ENCODE measurements at regions of chr14 and their contacts with region 1.

Region 1: DNA sequence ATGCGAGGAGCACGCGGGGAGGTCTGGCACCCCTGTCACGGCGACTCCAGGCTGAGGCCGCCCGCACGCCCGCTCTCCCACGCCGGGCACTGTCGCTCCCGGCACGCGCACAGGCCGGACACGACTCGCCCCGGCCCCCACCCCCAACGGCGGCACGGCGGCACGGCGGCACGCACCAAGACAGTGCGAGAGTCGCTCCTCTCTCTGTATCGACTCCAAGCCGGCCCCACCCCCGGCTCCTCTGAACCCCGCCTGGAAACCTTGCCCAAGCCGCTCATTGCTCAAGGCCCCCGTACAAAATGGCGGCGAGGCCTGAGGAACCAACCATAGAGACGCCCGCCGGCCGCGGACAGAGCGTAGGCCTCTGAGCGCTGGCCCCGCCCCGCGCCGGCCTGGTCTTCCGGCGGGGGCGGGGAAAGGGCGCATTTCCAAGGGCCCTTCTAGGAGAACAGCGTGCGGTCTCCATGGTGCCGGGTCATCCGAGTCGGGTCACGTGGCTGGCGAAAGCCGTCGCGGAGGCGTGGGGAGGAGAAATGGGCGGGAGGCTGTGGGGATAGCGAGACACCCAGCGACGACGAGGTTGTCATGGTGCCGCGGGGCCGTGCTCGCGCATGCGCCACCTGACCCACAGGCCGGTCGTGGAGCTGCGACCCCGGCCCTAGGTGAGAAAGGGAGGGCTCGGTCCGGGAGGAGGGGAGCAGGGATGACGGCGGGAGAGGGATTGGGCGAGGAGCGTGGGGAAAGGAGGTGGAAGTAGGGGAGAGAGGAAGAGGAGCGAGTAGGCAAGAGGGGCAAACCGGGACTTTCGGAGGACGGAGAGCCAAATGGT is at the start of gene CIPC:
- DNase-seq: peak; percentile 100
- H3K4me3 Mint-ChIP-seq: peak within 1 kb of the TSS; percentile 87
- H3K27ac Mint-ChIP-seq: peak within 1 kb of the TSS; percentile 93
- H3K4me1 Mint-ChIP-seq: peaks cover 36% of the 10 kb centered on the region
- H3K27me3 Mint-ChIP-seq: peaks cover 8% of the 10 kb centered on the region
- total RNA-seq, gene CIPC: 12.7 and 14.0 TPM in 2 replicates

Region 2: DNA sequence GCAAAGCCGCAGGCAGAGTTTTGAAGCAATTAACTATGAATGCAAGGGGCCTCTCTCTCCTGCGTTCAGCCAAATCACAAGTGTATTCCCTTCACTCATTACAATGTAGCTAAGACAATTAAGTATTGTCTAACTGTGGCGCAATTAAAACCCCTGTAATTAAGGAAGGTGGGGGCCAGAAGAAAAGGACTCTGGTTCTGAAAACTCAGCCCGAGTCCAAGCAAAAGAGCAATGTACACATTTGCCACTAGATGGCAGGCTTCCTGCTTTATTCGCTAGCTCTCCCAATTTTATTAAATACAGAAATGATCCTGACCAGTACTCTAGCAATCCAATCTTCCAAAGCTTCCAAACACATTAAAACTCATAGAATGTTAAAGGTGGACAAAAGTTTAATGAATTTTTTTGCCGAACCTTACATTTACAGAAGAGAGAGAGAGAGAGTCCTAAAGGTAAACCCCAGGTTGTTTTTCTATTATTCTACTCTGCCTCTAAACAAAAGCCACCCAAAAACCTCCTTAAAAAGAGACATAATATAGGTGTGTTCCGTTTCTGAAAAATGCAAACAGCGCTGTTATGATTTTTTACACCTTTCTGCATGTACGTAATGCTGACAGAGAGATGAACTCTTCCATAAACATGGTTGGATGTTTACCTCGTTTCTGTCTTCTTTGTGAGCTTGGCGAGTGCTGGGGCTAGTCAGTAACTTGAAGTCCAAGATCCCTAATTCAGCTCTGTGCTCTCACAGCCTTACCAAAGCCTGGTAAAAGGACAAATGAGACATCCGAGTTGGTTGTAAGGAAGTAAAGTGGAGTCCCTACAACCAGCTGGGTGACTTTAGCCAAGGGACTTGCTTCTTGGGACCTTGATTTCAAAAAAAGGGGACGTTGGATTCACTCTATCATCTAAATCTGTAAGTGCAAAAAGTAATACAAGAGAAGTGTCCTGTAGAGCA is 387.6 kb before region 1 on chr14:
- intact Hi-C with region 1: loop called (anchors 1 kb)
- DNase-seq: peak; percentile 79
- H3K4me3 Mint-ChIP-seq: no peak overlapping the region
- H3K27ac Mint-ChIP-seq: no peak overlapping the region
- H3K4me1 Mint-ChIP-seq: no peaks in the 10 kb centered on the region
- H3K27me3 Mint-ChIP-seq: peaks cover 9% of the 10 kb centered on the region

Region 3: GRCh38 chr14:76956316-76957090 is 141.4 kb before region 1 on chr14:
- intact Hi-C with region 1: loop called (anchors 2 kb)
- DNase-seq: peak; percentile 96
- H3K4me3 Mint-ChIP-seq: peak overlapping the region; percentile 82
- H3K27ac Mint-ChIP-seq: peak overlapping the region; percentile 97
- H3K4me1 Mint-ChIP-seq: peaks cover 71% of the 10 kb centered on the region
- H3K27me3 Mint-ChIP-seq: no peaks in the 10 kb centered on the region

Region 4: DNA sequence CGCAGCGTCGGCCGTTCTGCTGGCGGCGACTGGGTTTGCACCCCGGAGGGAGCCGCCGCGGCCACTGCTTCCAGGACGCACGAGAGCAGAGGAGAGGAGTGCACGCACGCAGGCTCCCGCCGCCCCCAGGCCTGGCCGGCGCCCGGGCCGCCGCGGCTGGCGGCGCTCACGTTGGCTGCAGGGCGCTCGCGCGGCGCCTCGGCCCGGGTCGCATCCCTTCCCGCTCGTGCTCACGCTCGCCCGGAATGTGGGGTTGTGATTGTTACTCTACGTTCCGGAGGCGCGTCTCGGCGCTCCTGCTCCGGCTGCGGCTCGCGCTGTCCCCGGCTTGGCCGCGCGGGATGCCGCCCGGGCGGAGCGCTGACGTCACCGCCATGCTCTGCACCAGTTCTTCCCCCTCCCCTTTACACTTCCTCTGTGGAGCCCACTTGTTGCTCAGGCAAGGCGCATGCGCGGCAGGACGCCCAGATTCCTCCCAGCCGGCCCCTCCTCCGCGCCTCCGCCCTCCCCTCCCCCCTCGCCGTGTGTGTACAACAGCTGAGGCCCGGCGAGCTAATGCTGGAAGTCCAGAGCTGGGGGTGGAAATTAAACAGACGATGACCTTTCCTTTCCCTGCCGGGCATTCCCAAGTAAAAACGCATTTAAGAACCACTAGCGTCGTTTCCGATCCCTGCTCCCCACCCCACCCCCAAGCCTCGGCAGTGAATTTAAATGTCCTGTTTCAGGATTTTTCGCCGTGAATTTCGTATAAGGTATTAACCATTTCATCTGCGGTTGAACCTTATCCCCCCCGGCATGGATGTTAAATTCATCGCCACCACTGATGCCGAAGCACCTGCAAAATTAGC is 69.3 kb before region 1 on chr14 and contains the start of gene IRF2BPL:
- intact Hi-C with region 1: no loop called
- DNase-seq: peak; percentile 98
- H3K4me3 Mint-ChIP-seq: peak within 1 kb of the TSS; percentile 99
- H3K27ac Mint-ChIP-seq: peak within 1 kb of the TSS; percentile 98
- H3K4me1 Mint-ChIP-seq: peaks cover 46% of the 10 kb centered on the region
- H3K27me3 Mint-ChIP-seq: no peaks in the 10 kb centered on the region
- total RNA-seq, gene IRF2BPL: 32.8 and 34.8 TPM in 2 replicates

Region 5: GRCh38 chr14:77086017-77086736 is 11.7 kb before region 1 on chr14:
- intact Hi-C with region 1: no loop called
- DNase-seq: peak; percentile 65
- H3K4me3 Mint-ChIP-seq: no peak overlapping the region
- H3K27ac Mint-ChIP-seq: peak overlapping the region; percentile 48
- H3K4me1 Mint-ChIP-seq: peaks cover 5% of the 10 kb centered on the region
- H3K27me3 Mint-ChIP-seq: peaks cover 9% of the 10 kb centered on the region

Region 6: GRCh38 chr14:77120771-77121743 is 23.1 kb after region 1 on chr14:
- intact Hi-C with region 1: loop called (anchors 2 kb)
- DNase-seq: peak; percentile 81
- H3K4me3 Mint-ChIP-seq: peak overlapping the region; percentile 62
- H3K27ac Mint-ChIP-seq: peak overlapping the region; percentile 74
- H3K4me1 Mint-ChIP-seq: peaks cover 27% of the 10 kb centered on the region
- H3K27me3 Mint-ChIP-seq: peaks cover 15% of the 10 kb centered on the region

Region 7: DNA sequence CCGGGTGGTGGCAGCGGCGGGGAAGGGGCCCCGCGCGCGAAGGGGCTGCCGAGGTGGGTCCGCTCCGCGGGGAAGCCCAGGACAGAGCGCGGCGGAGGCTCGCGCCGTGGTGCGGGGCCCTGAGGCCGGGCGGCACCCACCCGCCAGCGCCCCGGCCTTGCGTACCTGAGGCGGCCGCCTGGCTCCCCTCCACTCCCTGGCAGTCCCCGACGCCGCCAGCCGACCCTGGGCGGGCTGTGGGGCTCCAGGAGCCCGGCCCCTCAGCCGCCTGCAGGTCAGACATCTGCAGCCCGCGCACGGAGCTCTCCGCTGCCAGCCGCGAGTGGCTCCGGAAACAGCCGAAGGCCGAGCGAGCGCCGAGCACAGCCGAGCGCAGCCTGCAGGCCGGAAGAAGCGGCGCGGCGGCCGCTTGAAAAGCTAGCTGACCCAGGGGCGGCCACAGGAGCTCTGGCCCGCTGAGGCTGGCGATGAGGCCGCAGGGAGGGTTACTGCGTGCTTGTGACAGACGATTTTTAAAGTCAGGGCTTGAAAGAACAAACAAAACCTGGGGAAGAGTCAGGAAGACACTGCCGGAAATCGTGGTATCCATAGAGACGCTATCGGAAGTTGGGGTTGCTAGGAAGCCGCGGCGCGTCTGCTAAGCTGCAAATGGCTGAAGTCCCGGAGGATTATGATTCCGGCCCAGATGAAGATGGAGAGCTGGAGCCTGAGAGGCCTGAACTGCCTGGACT is 279.0 kb after region 1 on chr14 and contains the starts of genes SAMD15 and TMED8:
- intact Hi-C with region 1: loop called (anchors 5 kb)
- DNase-seq: peak; percentile 95
- H3K4me3 Mint-ChIP-seq: peak within 1 kb of the TSS; percentile 93
- H3K27ac Mint-ChIP-seq: peak within 1 kb of the TSS; percentile 92
- H3K4me1 Mint-ChIP-seq: peaks cover 29% of the 10 kb centered on the region
- H3K27me3 Mint-ChIP-seq: peaks cover 16% of the 10 kb centered on the region
- total RNA-seq, gene SAMD15: 0.28 and 0.63 TPM in 2 replicates
- total RNA-seq, gene TMED8: 31.1 and 32.1 TPM in 2 replicates